ENCODE measurements at regions of chr3 and their contacts with region 1.

Region 1: DNA sequence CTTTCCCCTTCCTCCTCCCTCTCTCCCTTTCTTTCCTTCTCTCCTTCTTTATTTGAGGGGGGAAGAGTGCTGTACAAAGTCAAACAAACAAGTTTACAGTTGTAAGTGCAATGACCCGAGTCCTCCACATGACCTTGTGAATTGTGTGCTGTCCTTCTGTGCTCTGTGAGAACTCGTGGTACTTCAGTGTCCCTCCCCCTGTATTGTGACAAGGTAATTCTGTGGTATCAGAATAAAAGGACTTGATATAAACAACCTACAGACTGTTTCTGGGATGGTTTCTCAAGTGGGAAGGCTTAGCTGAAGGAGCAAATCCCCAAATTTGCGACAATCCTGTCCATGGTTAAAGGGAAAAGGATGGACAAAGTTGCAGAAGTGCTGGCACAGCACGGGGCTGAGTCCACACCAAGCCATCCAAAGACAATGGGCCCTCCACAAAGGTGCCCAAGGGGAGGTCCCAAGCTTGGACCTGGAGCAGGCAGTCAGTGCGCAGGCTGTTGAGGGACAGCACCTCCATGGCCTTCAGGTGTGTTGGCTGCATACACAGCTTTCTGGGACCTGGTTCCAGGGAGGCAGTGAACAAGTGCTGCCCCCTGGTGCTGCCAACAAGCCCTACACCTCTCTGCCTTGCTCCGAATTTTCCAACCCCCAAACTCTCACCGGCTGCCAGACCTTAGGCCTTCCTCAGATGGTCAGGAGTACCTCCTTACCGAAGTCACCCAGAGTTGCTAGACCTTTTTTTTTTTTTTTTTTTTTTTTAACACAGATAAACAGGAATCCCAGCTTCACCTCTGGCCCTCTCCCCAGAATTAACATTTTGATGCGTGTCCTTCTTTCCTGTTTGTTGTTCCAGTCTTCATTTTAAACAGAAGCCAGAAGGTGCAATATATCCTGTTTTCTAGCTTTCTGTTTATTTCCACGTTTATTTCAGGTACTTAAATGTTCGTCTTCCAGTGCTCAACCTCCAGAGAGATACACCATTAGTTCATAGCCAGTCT is 2.6 kb upstream of the APEH start:
- DNase-seq: peak; percentile 59 to 82
- ATAC-seq: peak; percentile 24 to 48 (median 40)
- H3K4me3 ChIP-seq: no peak overlapping the region
- H3K27ac ChIP-seq: peak overlapping the region; percentile 5
- H3K4me1 ChIP-seq: peaks cover 20% of the 10 kb centered on the region
- H3K27me3 ChIP-seq: no peaks in the 10 kb centered on the region
- CTCF ChIP-seq: peak; percentile 77

Region 2: GRCh38 chr3:49539659-49540560 is 131.7 kb before region 1 on chr3:
- intact Hi-C with region 1: loop called (anchors 1 to 2 kb)
- DNase-seq: peak; percentile 94 to 97
- ATAC-seq: peak; percentile 86 to 92 (median 87)
- H3K4me3 ChIP-seq: peak overlapping the region; percentile 74
- H3K27ac ChIP-seq: peak overlapping the region; percentile 79
- H3K4me1 ChIP-seq: peaks cover 24% of the 10 kb centered on the region
- H3K27me3 ChIP-seq: no peaks in the 10 kb centered on the region
- CTCF ChIP-seq: peak; percentile 85

Region 3: GRCh38 chr3:50194128-50194902 is 522.7 kb after region 1 on chr3:
- intact Hi-C with region 1: no loop called
- DNase-seq: peak; percentile 71 to 86
- ATAC-seq: peak; percentile 70 to 90 (median 81)
- H3K4me3 ChIP-seq: peak overlapping the region; percentile 23
- H3K27ac ChIP-seq: no peak overlapping the region
- H3K4me1 ChIP-seq: peaks cover 9% of the 10 kb centered on the region
- H3K27me3 ChIP-seq: peaks cover 0 to 18% (median 0%) of the 10 kb centered on the region in 3 donors
- CTCF ChIP-seq: peak; percentile 80

Measured in psoas muscle (tissue), 8 donors.